OCI-LY7 (cell line): ENCODE measurements at regions of chr3 and their contacts with region 1.

Region 1: DNA sequence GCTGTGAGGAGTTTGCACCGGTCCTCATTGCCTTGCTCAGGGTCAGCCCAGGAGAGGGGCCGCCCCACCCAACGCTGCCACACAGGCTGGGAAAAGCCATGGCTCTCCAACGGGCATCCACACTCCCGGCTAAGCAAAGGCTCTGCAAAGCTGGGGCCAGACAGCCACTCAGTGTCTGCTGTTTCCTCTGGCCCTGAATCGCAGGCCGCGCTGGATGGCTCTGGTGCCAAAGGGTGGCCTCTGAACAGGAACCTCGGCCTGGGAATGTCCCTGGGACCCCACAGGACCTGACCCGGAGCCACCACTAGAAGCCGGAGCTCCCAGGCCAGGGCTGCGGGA is 42.9 kb downstream of the RPN1 start:
- DNase-seq: no peak
- H3K4me3 ChIP-seq: no peak overlapping the region
- H3K27ac ChIP-seq: no peak overlapping the region
- H3K4me1 ChIP-seq: no peaks in the 10 kb centered on the region
- CTCF ChIP-seq: no peak

Region 2: DNA sequence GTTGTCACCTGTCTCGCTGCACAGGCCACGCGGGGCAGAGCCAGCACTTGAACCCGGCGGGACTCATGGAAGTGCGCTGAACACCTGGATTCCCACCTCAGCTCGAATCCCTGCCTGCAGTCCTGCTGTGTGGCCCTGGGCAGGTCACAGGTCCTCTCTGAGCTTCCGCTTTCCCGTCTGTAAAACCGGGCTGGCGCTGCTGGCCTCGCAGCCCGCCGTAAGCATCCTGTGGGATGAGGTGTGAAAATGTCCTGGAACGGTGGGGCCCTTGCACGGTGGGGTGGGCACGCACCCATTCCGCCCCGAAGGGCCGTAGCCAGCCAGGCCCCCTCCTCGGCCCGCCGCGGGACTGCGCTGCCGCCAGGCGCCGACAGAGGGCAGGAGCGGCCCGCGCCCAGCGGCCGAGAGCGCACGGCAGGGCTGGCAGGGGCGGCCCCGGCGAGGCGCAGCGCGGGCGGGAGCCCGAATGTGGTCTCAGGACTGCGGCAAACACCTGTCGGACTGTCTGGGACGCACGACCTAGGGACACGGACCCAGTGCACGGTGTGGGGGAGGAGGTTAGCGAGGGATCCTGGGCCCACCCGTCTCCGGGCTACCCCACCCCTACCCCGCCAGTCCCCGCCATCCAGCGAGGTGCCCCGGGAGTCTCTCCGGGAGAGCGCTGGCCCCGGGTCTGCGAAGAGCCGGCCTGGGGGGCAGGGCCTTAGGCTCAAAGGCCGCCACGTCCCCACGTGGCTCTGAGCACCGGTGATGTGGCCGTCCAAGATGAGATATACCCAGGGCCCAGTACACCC is 181.4 kb before region 1 on chr3:
- CTCF ChIA-PET with region 1: no interaction called
- POLR2A ChIA-PET with region 1: no interaction called
- intact Hi-C with region 1: loop called (anchors 5 kb)
- DNase-seq: peak; percentile 40
- H3K4me3 ChIP-seq: no peak overlapping the region
- H3K27ac ChIP-seq: no peak overlapping the region
- H3K4me1 ChIP-seq: no peaks in the 10 kb centered on the region
- CTCF ChIP-seq: peak; percentile 73

Region 3: GRCh38 chr3:128623762-128624176 is 16.1 kb after region 1 on chr3:
- CTCF ChIA-PET with region 1: no interaction called
- POLR2A ChIA-PET with region 1: no interaction called
- intact Hi-C with region 1: no loop called
- DNase-seq: no peak
- H3K4me3 ChIP-seq: no peak overlapping the region
- H3K27ac ChIP-seq: no peak overlapping the region
- H3K4me1 ChIP-seq: peaks cover 11% of the 10 kb centered on the region
- CTCF ChIP-seq: no peak